GM10248 (cell line): ENCODE measurements at regions of chr10 and their contacts with region 1.

Region 1: DNA sequence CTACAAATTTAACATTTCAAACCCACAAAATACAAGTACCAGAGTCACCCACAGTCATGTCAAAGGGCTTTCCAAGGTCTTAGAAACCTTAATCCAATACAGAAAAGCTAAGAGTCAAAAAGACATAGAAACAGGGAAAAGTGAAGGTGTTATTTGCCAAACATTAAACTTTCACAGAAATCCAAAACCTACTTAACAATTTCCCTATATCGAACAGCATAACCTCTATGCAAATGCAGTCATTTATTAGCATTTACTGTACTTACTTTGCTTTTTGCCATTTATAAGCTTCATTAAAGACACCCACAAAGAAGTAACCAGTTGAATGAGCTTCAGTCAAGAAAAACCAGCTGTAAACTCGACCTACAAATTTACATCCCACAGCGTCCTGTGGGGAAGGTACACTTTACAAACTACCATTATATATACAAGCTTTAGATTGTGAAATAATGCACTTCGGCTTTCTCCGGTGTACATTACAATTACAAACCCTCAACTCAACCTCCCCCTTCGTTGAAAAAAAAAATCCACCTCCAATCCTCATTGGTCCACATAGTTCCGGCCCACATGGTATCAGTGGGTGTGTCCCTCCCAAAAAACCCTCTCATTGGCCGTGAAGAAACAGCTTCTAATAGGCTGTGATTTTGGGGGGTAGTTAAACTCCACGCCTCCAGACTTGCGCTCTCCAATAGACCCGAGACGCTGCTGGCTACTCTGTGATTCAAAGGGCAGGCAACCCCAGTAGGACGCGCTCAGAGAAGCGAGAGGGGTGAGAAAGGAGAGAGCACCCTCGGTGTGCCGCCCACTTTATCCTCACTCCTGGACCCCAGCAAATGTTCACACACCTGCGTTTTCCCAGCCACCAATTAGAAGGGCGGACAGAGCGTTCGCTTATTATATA is 1.4 kb downstream of the PANK1 start:
- DNase-seq: peak; percentile 91
- CTCF ChIP-seq: no peak

Region 2: DNA sequence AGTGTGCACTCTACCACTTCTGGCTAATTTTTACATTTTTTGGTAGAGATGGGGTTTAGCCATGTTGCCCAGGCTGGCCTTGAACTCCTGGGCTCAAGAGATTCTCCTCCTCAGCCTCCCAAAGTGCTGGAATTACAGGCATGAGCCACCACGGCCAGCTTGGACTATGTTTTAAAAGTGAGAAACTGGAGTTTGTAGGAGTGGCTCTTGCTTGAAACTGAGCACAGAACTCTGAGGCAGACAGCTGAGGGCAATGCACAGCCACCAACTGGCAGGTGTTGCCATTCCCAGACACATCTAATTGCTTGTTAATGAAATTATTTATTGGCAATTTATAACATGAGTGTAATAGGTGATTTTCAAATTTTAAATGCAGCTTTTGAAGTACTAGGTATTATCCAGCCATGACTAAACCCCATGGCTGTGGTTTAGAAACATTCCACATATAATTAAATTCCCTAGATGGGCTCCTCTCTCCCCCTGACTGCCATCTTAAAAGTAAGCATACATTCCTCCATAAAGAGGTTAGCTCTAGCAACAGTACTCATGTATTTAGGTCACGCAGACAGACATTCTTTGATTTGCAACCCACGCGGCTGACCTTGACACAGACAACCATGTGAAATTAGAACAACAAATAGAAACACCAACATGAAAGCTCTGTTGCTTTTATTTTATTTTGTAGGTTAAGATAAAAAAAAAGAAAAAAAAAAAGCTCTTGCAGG is 18.5 kb before region 1 on chr10:
- CTCF ChIA-PET with region 1: interaction called, 4 read pairs
- POLR2A ChIA-PET with region 1: interaction called, 11 read pairs
- DNase-seq: no peak
- CTCF ChIP-seq: no peak

Region 3: GRCh38 chr10:89701238-89702120 is 57.8 kb after region 1 on chr10 and contains the start of gene KIF20B:
- CTCF ChIA-PET with region 1: interaction called, 4 read pairs
- POLR2A ChIA-PET with region 1: interaction called, 12 read pairs
- DNase-seq: peak; percentile 97
- CTCF ChIP-seq: peak; percentile 63